ENCODE measurements at regions of chr16 and their contacts with region 1.

Region 1: DNA sequence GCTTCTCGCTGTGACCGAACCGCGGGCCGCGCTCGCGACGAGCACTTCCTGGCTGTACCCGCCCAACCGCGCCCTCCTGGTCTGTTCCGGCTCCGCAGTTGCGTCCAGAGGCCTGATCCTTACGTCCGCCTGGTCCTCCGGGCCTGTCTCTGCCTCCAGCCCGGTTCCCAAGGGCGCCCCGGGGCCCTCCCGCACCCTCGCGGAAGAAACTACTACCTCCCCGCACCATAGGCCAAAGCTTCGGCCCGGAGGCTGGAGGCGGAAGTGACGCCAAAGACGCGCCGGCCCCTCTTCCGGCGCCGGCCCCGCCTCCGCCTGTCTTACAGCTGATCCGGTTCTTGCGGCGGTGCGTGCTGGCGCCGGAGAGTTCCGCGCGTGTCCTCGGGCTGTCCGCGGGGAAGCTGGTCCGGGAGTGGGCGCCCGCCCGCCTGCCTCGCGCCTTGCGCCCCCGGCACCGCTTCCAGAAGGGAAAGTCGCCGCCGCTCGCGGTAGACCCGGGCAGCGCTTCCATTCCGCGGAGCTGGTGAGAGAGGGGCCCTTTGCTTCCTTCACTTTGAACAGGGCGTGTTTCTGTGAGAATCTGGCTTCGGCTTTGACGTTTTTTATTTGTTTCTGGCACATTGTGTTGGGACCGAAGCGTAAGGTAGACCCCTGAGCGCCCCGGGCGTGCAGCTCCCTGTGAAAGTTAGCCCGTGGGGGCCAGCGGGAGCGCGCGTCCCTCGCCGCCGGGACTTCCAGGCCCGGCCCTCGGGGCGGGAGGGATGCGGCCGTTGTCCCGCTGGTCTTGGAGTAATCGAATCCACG is at the start of gene ZNF778:
- H3K4me3 Mint-ChIP-seq: peak within 1 kb of the TSS; percentile 83
- H3K27ac Mint-ChIP-seq: peak within 1 kb of the TSS; percentile 83
- H3K4me1 Mint-ChIP-seq: peaks cover 21% of the 10 kb centered on the region
- H3K27me3 Mint-ChIP-seq: no peaks in the 10 kb centered on the region

Region 2: GRCh38 chr16:88737298-88738150 is 480.1 kb before region 1 on chr16:
- intact Hi-C with region 1: loop called (anchors 2 kb)
- H3K4me3 Mint-ChIP-seq: no peak overlapping the region
- H3K27ac Mint-ChIP-seq: no peak overlapping the region
- H3K4me1 Mint-ChIP-seq: peaks cover 5% of the 10 kb centered on the region
- H3K27me3 Mint-ChIP-seq: no peaks in the 10 kb centered on the region

Region 3: GRCh38 chr16:88811769-88812512 is 405.6 kb before region 1 on chr16 and contains the start of gene APRT:
- intact Hi-C with region 1: loop called (anchors 5 kb)
- H3K4me3 Mint-ChIP-seq: peak within 1 kb of the TSS; percentile 80
- H3K27ac Mint-ChIP-seq: peak within 1 kb of the TSS; percentile 88
- H3K4me1 Mint-ChIP-seq: peaks cover 51% of the 10 kb centered on the region
- H3K27me3 Mint-ChIP-seq: no peaks in the 10 kb centered on the region

Region 4: GRCh38 chr16:88856828-88857733 is 360.5 kb before region 1 on chr16 and contains the starts of genes GALNS and TRAPPC2L:
- intact Hi-C with region 1: loop called (anchors 2 kb)
- H3K4me3 Mint-ChIP-seq: peak within 1 kb of the TSS; percentile 90
- H3K27ac Mint-ChIP-seq: peak within 1 kb of the TSS; percentile 83
- H3K4me1 Mint-ChIP-seq: peaks cover 62% of the 10 kb centered on the region
- H3K27me3 Mint-ChIP-seq: no peaks in the 10 kb centered on the region

Region 5: GRCh38 chr16:89115216-89115861 is 102.3 kb before region 1 on chr16:
- intact Hi-C with region 1: loop called (anchors 5 kb)
- H3K4me3 Mint-ChIP-seq: peak overlapping the region; percentile 85
- H3K27ac Mint-ChIP-seq: peak overlapping the region; percentile 94
- H3K4me1 Mint-ChIP-seq: peaks cover 57% of the 10 kb centered on the region
- H3K27me3 Mint-ChIP-seq: no peaks in the 10 kb centered on the region

Region 6: DNA sequence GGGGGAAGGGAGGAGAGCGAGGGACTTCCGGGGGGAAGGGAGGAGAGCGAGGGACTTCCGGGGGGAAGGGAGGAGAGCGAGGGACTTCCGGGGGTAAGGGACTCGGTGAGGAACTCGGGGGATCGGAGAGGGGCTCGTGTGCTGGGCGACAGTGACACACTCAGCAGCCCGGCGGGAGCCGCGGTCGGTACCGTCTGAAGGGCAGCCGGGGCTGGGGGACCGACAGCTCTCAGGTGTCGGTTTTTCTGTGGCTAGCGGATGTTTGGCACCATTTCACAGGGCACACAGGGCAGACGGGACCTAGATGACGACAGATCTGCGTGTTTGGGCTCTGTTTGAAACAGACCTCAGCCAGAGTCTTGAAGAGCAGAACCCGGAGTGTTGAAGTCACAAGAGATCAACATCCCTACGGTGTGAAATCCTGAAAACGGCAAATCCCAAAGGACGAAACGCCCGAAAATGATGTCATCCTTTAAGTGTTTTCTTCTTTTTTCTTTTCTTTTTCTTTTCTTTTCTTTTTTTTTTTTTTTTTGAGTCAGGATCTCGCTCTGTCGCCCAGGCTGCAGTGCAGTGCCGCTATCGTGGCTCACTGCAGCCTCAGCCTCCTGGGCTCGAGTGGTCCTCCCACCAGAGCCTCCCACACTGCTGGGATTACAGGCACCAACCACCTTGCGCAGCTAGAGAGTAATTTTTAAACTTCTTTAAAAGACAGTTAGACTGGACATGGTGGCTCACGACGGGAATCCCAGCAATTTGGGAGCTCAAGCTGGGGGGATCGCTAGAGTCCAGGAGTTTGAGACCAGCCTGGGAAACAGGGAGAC is 23.8 kb after region 1 on chr16:
- intact Hi-C with region 1: loop called (anchors 2 kb)
- H3K4me3 Mint-ChIP-seq: peak overlapping the region; percentile 96
- H3K27ac Mint-ChIP-seq: peak overlapping the region; percentile 98
- H3K4me1 Mint-ChIP-seq: peaks cover 23% of the 10 kb centered on the region
- H3K27me3 Mint-ChIP-seq: peaks cover 23% of the 10 kb centered on the region